ENCODE measurements at regions of chr1 and their contacts with region 1.

Region 1: GRCh38 chr1:67230539-67230938 is 64.3 kb downstream of the IL23R start:
- DNase-seq: no peak
- ATAC-seq: no peak
- H3K4me3 ChIP-seq: no peak overlapping the region
- H3K4me3 Mint-ChIP-seq: no peak overlapping the region
- H3K27ac ChIP-seq: no peak overlapping the region
- H3K27ac Mint-ChIP-seq: no peak overlapping the region
- H3K4me1 ChIP-seq: no peaks in the 10 kb centered on the region
- H3K4me1 Mint-ChIP-seq: peaks cover 0 to 8% (median 2%) of the 10 kb centered on the region in 7 donors
- H3K27me3 ChIP-seq: no peaks in the 10 kb centered on the region
- H3K27me3 Mint-ChIP-seq: peaks cover 0 to 7% (median 0%) of the 10 kb centered on the region in 5 donors

Region 2: GRCh38 chr1:67274623-67275325 is 44.2 kb after region 1 on chr1:
- CTCF ChIA-PET with region 1: no interaction called
- POLR2A ChIA-PET with region 1: no interaction called
- intact Hi-C with region 1: loop called in 1 of 2 experiments (anchors 2 kb)
- DNase-seq: peak in 3 of 9 donors; percentile 1 to 25 (median 24)
- ATAC-seq: peak; percentile 66
- H3K4me3 ChIP-seq: no peak overlapping the region
- H3K4me3 Mint-ChIP-seq: peak overlapping the region in 1 of 10 donors; percentile 58
- H3K27ac ChIP-seq: no peak overlapping the region
- H3K27ac Mint-ChIP-seq: peak overlapping the region in 2 of 9 donors; percentile 5 to 82
- H3K4me1 ChIP-seq: no peaks in the 10 kb centered on the region
- H3K4me1 Mint-ChIP-seq: peaks cover 0 to 30% (median 10%) of the 10 kb centered on the region in 7 donors
- H3K27me3 ChIP-seq: no peaks in the 10 kb centered on the region
- H3K27me3 Mint-ChIP-seq: no peaks in the 10 kb centered on the region

Region 3: GRCh38 chr1:67332653-67333529 is 102.4 kb after region 1 on chr1:
- CTCF ChIA-PET with region 1: interaction called, 4 read pairs
- POLR2A ChIA-PET with region 1: no interaction called
- intact Hi-C with region 1: loop called in 1 of 2 experiments (anchors 2 kb)
- DNase-seq: peak in 5 of 9 donors; percentile 16 to 41 (median 33)
- ATAC-seq: peak; percentile 84
- H3K4me3 ChIP-seq: no peak overlapping the region
- H3K4me3 Mint-ChIP-seq: peak overlapping the region in 6 of 10 donors; percentile 0 to 51 (median 24)
- H3K27ac ChIP-seq: no peak overlapping the region
- H3K27ac Mint-ChIP-seq: peak overlapping the region; percentile 3 to 87 (median 23)
- H3K4me1 ChIP-seq: peaks cover 17 to 34% of the 10 kb centered on the region in 2 donors
- H3K4me1 Mint-ChIP-seq: peaks cover 19 to 73% (median 39%) of the 10 kb centered on the region in 7 donors
- H3K27me3 ChIP-seq: no peaks in the 10 kb centered on the region
- H3K27me3 Mint-ChIP-seq: no peaks in the 10 kb centered on the region

Region 4: GRCh38 chr1:67489643-67490042 is 259.1 kb after region 1 on chr1:
- CTCF ChIA-PET with region 1: interaction called, 6 read pairs
- POLR2A ChIA-PET with region 1: no interaction called
- intact Hi-C with region 1: loop called in 1 of 2 experiments (anchors 1 kb)
- DNase-seq: peak in 2 of 9 donors; percentile 5 to 13
- ATAC-seq: no peak
- H3K4me3 ChIP-seq: no peak overlapping the region
- H3K4me3 Mint-ChIP-seq: no peak overlapping the region
- H3K27ac ChIP-seq: no peak overlapping the region
- H3K27ac Mint-ChIP-seq: no peak overlapping the region
- H3K4me1 ChIP-seq: no peaks in the 10 kb centered on the region
- H3K4me1 Mint-ChIP-seq: peaks cover 0 to under 1% (median 0%) of the 10 kb centered on the region in 7 donors
- H3K27me3 ChIP-seq: no peaks in the 10 kb centered on the region
- H3K27me3 Mint-ChIP-seq: no peaks in the 10 kb centered on the region

Measured in naive thymus-derived CD4-positive, alpha-beta T cell (primary cell).